ENCODE measurements at regions of chr6 and their contacts with region 1.

Region 1: GRCh38 chr6:23851522-23851921 is 274.5 kb upstream of the NRSN1 start:
- DNase-seq: no peak
- ATAC-seq: no peak
- H3K4me3 ChIP-seq: no peak overlapping the region
- H3K27ac ChIP-seq: no peak overlapping the region
- H3K4me1 ChIP-seq: no peaks in the 10 kb centered on the region
- H3K27me3 ChIP-seq: no peaks in the 10 kb centered on the region
- CTCF ChIP-seq: no peak

Region 2: GRCh38 chr6:21908161-21908848 is 1943.2 kb before region 1 on chr6:
- intact Hi-C with region 1: loop called in 1 of 10 experiments (anchors 5 kb)
- DNase-seq: no peak
- ATAC-seq: no peak
- H3K4me3 ChIP-seq: no peak overlapping the region
- H3K27ac ChIP-seq: no peak overlapping the region
- H3K4me1 ChIP-seq: peaks cover 0 to 11% (median 0%) of the 10 kb centered on the region in 9 donors
- H3K27me3 ChIP-seq: no peaks in the 10 kb centered on the region
- CTCF ChIP-seq: no peak

Measured in heart right ventricle (tissue), 16 donors.